SK-N-SH (cell line): ENCODE measurements at regions of chr7 and their contacts with region 1.

Region 1: DNA sequence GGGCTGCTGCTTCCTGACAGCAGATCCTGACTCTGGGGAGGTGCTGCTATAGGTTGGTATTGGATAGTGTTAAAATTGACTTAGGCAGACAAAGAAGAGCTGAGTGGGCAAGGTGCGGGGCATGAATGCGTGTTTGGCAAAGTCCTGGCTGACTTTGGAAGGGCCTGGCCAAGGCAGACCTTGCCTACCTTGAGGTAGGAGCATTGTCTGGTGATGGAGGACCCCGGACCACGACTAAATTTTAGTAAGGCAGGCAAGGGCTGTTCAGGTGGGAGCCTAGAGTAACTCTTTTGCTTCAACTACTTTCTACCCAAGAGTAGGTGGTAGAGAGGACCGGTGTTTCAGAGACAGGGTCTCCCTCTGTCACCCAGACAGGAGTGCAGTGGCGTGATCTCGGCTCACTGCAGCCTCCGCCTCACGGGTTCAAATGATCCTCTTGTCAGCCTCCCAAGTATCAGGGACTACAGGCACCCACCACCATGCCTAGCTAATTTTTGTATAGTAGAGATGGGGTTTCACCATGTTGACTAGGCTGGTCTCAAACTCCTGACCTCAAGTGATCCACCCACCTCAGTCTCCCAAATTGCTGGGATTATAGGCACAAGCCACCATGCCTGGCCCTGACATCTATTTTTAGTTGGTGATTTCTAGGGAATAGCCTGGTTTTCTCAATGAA is 12.2 kb upstream of the LAT2 start:
- DNase-seq: no peak
- H3K4me3 ChIP-seq: no peak overlapping the region
- H3K27ac ChIP-seq: no peak overlapping the region
- H3K4me1 ChIP-seq: no peaks in the 10 kb centered on the region
- H3K27me3 ChIP-seq: no peaks in the 10 kb centered on the region
- CTCF ChIP-seq: no peak
- EP300 ChIP-seq: no peak
- RAD21 ChIP-seq: no peak

Region 2: DNA sequence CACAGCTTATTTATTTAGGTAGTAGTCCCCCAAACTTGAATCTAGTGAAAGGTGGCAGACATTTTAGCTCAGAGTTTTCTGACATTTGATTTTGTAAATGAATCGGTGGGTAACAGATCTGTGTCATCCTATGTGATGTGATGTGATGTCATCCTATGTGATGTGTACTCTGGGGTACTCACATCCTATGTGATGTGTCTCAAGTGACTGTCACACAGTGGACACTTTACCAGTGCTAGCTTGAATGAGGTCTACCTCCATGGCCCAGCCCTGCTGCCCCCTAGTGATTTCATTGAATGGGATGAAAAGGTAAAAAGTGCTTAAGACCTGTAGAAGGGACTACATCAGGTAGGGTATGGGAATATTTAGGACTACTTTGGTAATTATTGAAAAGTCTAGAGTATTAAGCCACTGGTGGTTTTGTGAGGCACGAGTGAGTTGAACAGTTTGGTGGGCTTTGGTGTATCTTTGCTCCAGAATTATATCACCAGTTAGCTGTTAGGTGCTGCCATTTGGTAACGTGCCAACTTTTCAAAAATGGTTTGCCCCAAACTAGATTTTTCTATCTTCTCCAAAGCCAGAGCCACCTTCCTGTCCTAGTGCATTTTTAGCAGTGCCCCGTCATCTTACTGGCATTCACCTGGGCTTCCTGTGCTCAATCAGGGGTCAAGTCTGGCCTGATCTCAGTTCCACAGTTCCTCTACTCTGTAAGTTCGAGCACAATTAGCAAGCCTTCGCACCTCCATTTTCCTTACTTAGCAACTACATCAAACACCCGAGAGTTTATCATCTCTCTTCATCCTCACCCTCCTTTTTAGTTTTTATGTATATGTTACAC is 13.8 kb before region 1 on chr7:
- CTCF ChIA-PET with region 1: interaction called, 13 read pairs
- POLR2A ChIA-PET with region 1: interaction called, 4 read pairs
- DNase-seq: peak; percentile 49
- H3K4me3 ChIP-seq: no peak overlapping the region
- H3K27ac ChIP-seq: no peak overlapping the region; a peak in 1 of 4 replicates
- H3K4me1 ChIP-seq: peaks cover 17 to 28% of the 10 kb centered on the region in 2 experiments; a peak in 3 of 4 replicates
- H3K27me3 ChIP-seq: no peaks in the 10 kb centered on the region
- CTCF ChIP-seq: peak; percentile 58
- EP300 ChIP-seq: no peak
- RAD21 ChIP-seq: peak; percentile 52